ENCODE measurements at regions of chr22 and their contacts with region 1.

Region 1: DNA sequence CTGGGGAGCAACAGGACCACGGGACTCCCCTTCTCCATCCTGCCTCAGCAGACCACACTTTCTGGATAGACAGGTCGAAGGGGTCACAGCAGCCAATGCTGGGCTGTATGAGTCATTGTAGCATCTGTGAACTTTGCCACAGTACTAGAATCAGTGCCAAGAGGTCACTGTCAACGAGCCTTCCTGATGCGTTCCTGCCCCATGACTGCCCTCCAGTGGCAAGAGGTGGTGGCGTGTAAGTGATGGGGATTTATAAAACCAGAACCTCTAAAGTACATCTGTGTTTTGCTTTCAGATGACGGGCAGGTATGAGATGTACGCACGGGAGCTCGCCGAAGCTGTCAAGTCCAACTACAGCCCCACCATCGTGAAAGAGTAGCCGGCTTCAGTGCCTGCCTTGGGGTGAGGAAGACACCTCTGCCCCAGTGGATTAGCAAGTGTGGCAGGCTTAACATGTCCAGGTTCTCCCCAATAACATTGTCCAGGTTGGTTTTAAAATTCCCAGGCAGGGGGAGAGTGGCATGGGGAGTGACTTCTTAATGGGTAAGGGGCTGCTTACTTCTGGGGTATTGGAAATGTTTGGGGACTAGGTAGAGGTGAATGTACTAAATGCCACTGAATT is 29.4 kb downstream of the GUCD1 start:
- DNase-seq: peak; percentile 66
- ATAC-seq: peak; percentile 90
- H3K4me3 Mint-ChIP-seq: no peak overlapping the region
- H3K27ac Mint-ChIP-seq: no peak overlapping the region
- H3K4me1 Mint-ChIP-seq: peaks cover 14% of the 10 kb centered on the region
- H3K27me3 Mint-ChIP-seq: no peaks in the 10 kb centered on the region
- CTCF ChIP-seq: peak; percentile 87

Region 2: DNA sequence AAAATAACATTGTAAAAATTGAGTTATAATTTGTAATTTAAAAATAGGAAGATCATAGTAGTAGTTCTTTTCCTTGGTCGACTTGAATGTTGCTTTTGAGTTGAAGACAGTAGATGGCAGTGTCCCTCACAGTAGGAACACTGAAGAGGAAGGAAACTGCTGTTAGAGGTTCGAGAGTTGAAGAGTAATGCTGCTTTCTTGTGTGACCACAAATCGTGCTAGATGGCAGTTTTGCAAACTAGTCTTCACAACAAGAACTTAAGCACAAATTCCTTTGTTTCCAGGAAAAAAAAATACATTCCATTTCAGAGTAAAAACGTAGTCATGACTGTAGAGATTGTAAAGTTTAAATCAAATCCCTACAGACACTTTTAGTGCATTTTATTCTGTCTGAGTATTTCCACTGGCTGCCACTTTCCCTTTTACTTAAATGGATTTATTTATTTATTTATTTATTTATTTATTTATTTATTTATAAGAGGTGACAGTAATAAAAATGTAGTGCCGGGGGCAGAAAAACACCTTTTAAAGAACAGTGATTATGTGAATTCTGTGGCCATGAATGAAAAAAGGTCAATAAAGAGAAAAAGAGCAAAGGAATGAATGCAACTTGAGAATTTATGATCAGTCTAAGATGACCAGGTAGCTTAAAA is 200.3 kb before region 1 on chr22:
- CTCF ChIA-PET with region 1: interaction called, 6 read pairs
- POLR2A ChIA-PET with region 1: no interaction called
- intact Hi-C with region 1: loop called (anchors 1 kb)
- DNase-seq: no peak
- ATAC-seq: peak; percentile 88
- H3K4me3 Mint-ChIP-seq: no peak overlapping the region
- H3K27ac Mint-ChIP-seq: no peak overlapping the region
- H3K4me1 Mint-ChIP-seq: peaks cover 21% of the 10 kb centered on the region
- H3K27me3 Mint-ChIP-seq: no peaks in the 10 kb centered on the region
- CTCF ChIP-seq: peak; percentile 41

Region 3: DNA sequence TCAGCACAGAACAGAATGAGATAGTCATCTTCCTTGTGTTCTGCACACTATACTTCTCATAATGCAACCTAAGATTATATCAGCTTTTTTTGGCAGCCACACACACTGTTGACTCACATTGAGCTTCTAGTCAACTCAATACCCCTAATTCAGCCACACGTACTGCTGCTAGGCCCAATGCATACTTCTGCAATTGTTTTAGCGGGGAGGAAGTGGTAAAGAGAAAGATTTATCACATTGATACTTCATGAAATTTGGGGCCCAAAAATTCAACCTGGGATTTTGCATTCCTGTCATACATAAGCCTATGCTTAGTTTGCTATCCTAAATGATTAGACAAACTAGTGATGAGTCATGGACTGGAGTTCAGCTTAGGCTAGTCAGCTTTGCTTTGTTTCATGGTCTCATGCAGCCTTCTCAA is 39.0 kb before region 1 on chr22:
- CTCF ChIA-PET with region 1: interaction called, 5 read pairs
- POLR2A ChIA-PET with region 1: no interaction called
- intact Hi-C with region 1: loop called (anchors 1 kb)
- DNase-seq: no peak
- ATAC-seq: no peak
- H3K4me3 Mint-ChIP-seq: no peak overlapping the region
- H3K27ac Mint-ChIP-seq: peak overlapping the region; percentile 9
- H3K4me1 Mint-ChIP-seq: peaks cover 8% of the 10 kb centered on the region
- H3K27me3 Mint-ChIP-seq: peaks cover 2% of the 10 kb centered on the region
- CTCF ChIP-seq: no peak

Region 4: GRCh38 chr22:24503137-24503842 is 22.2 kb before region 1 on chr22:
- CTCF ChIA-PET with region 1: interaction called, 17 read pairs
- POLR2A ChIA-PET with region 1: interaction called, 5 read pairs
- intact Hi-C with region 1: loop called (anchors 1 kb)
- DNase-seq: peak; percentile 73
- ATAC-seq: peak; percentile 95
- H3K4me3 Mint-ChIP-seq: no peak overlapping the region
- H3K27ac Mint-ChIP-seq: peak overlapping the region; percentile 32
- H3K4me1 Mint-ChIP-seq: peaks cover 47% of the 10 kb centered on the region
- H3K27me3 Mint-ChIP-seq: no peaks in the 10 kb centered on the region
- CTCF ChIP-seq: peak; percentile 18

Region 5: GRCh38 chr22:24758164-24758799 is 232.8 kb after region 1 on chr22:
- CTCF ChIA-PET with region 1: no interaction called
- POLR2A ChIA-PET with region 1: no interaction called
- intact Hi-C with region 1: loop called (anchors 10 kb)
- DNase-seq: no peak
- ATAC-seq: no peak
- H3K4me3 Mint-ChIP-seq: no peak overlapping the region
- H3K27ac Mint-ChIP-seq: no peak overlapping the region
- H3K4me1 Mint-ChIP-seq: no peaks in the 10 kb centered on the region
- H3K27me3 Mint-ChIP-seq: peaks cover 10% of the 10 kb centered on the region
- CTCF ChIP-seq: peak; percentile 92

Measured in activated B cell treated with CpG ODN at 0.5 μM for 24 hours (primary cell).